A673 (cell line): ENCODE measurements at regions of chr17 and their contacts with region 1.

Region 1: DNA sequence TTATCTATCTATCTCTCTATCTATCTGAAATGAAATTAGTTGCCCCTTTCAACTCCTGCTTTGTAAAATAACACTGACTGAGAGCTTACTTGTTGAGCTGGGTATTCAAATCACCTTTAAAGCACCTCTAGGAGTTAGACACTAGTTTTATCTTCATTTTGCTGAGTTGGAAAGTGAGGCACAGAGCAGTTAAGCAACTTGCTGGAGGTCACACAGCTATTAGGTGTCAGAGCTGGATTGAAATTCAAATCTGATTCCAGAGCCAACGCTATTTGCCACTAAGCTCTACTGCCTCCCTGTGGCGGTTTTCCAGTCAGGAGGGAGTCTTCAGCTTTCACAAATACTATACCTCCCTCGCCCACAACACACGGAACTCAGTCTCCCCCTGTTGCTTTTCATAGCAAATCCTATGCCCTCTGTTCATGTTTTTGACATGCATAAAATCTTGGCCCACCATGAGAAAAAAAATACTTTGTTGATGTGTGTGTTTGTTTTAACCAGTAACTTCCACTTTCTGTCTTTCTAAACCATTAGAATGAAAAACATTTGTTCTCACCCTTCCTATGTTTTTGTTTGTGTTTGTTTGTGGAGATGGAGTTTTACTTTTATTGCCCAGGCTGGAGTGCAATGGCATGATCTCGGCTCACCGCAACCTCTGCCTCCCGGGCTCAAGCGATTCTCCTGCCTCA is 74.8 kb upstream of the SMURF2 start:
- DNase-seq: peak; percentile 62
- H3K4me3 ChIP-seq: no peak overlapping the region
- H3K27ac ChIP-seq: no peak overlapping the region
- H3K4me1 ChIP-seq: peaks cover 14% of the 10 kb centered on the region
- H3K27me3 ChIP-seq: no peaks in the 10 kb centered on the region
- CTCF ChIP-seq: peak; percentile 63

Region 2: DNA sequence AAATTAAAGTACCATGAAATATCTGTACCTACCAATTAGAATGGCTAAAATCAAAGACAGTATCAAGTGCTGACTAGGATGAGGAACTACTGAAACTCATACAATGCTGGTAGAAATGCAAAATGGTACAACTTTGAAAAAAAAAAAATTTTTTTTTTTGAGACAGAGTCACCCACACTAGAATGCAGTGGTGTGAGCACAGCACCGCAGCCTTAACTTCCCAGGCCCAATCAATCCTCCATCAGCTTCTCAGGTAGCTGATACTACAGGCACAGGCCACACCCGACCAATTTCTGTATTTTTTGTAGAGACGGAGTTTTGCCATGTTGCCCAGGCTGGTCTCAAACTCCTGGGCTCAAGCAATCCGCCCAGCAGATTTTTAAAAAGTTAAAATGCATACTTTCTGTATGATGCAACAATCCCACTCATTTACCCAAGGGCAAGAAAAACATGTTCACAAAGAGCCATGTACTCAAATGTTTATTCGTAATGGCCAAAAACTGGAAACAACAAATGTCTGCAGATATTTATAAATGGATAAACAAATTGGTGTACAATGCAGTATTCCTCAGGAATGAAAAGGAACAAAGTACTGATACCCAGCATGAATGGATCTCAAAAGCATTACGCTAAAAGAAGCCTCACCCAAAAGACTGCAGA is 83.5 kb before region 1 on chr17:
- CTCF ChIA-PET with region 1: interaction called, 15 read pairs
- POLR2A ChIA-PET with region 1: interaction called, 8 read pairs
- intact Hi-C with region 1: no loop called
- DNase-seq: no peak
- H3K4me3 ChIP-seq: no peak overlapping the region
- H3K27ac ChIP-seq: peak overlapping the region; percentile 65
- H3K4me1 ChIP-seq: no peaks in the 10 kb centered on the region
- H3K27me3 ChIP-seq: no peaks in the 10 kb centered on the region
- CTCF ChIP-seq: no peak

Region 3: DNA sequence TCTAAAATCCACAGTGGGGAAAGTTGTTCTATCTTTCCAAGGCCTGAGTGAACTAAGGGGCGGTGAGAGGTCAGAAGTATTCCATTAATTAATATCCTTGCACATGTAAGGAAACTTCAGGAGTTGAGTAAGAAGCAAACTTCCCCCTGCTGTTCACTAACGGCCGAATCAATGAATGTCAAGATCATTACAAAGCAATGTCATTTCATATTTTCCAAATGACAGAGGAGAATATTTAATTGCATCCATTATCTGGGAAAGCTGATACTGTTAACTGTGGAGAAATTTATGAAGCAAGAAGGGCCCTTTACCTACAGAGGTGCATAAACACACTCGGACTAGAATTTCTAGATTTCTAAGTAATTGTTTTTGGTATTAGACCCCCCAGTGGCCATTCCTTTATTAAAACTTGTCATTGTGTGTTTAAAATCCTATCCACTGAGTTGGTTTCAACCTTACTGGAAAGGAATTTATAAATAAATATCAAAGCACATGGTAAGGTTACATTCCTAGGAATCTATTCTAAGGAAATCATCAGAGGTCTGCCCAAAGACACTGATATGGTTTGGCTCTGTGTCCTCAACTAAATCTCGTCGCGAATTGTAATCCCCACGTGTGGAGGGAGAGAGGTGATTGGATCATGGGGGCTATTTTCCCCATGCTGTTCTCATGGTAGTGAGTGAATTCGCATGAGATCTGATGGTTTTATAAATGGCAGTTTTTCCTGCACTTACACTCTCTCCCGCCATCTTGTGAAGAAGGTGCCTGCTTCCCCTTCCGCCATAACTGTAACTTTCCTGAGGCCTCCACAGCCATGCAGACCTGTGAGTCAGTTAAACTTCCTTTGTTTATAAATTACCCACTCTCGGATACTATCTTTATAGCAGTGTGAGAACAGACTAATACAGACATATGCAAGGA is 54.4 kb before region 1 on chr17:
- CTCF ChIA-PET with region 1: no interaction called
- POLR2A ChIA-PET with region 1: no interaction called
- intact Hi-C with region 1: no loop called
- DNase-seq: no peak
- H3K4me3 ChIP-seq: no peak overlapping the region
- H3K27ac ChIP-seq: no peak overlapping the region
- H3K4me1 ChIP-seq: no peaks in the 10 kb centered on the region
- H3K27me3 ChIP-seq: no peaks in the 10 kb centered on the region
- CTCF ChIP-seq: no peak

Region 4: GRCh38 chr17:64718059-64718458 is 18.9 kb before region 1 on chr17:
- CTCF ChIA-PET with region 1: no interaction called
- POLR2A ChIA-PET with region 1: no interaction called
- intact Hi-C with region 1: no loop called
- DNase-seq: no peak
- H3K4me3 ChIP-seq: no peak overlapping the region
- H3K27ac ChIP-seq: no peak overlapping the region
- H3K4me1 ChIP-seq: no peaks in the 10 kb centered on the region
- H3K27me3 ChIP-seq: no peaks in the 10 kb centered on the region
- CTCF ChIP-seq: no peak